A673 (cell line): ENCODE measurements at regions of chr10 and their contacts with region 1.

Region 1: GRCh38 chr10:100433253-100434240 is 29.3 kb upstream of the WNT8B start:
- DNase-seq: peak; percentile 96
- H3K4me3 ChIP-seq: no peak overlapping the region
- H3K27ac ChIP-seq: no peak overlapping the region
- H3K4me1 ChIP-seq: no peaks in the 10 kb centered on the region
- H3K27me3 ChIP-seq: no peaks in the 10 kb centered on the region
- CTCF ChIP-seq: peak; percentile 100

Region 2: GRCh38 chr10:100303724-100304319 is 129.7 kb before region 1 on chr10:
- CTCF ChIA-PET with region 1: no interaction called
- POLR2A ChIA-PET with region 1: no interaction called
- intact Hi-C with region 1: loop called (anchors 2 kb)
- DNase-seq: peak; percentile 48
- H3K4me3 ChIP-seq: no peak overlapping the region
- H3K27ac ChIP-seq: no peak overlapping the region
- H3K4me1 ChIP-seq: no peaks in the 10 kb centered on the region
- H3K27me3 ChIP-seq: no peaks in the 10 kb centered on the region
- CTCF ChIP-seq: peak; percentile 76

Region 3: DNA sequence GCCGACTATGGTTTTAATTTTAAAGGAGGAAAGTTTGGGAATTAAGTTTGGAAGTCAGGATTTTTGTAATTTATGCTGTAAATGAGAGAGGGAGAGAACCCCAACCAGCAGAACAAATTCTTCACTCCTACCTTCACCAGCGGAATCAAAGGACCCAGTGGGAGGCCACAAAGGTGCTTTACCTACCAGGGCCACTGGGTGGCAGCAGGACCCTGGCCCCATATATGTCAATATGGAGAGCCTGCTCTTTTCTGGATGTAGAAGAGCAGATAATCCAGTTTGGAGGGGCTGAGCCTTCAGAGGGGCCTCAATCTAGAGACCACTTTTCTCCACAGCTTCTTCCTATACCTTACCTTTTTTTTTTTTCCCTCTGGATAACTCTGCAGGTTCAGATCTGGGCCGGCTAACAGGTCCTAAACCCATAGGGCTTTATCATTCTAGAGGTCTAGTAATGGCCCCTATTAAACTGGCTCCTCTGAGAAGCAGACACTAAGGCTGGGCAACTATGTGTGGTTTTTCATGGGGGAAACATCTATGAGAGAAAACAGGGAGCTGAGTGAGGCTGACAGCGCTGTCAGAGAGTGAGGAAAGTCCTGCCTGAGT is 95.0 kb before region 1 on chr10:
- CTCF ChIA-PET with region 1: interaction called, 4 read pairs
- POLR2A ChIA-PET with region 1: no interaction called
- intact Hi-C with region 1: loop called (anchors 1 kb)
- DNase-seq: peak; percentile 79
- H3K4me3 ChIP-seq: no peak overlapping the region
- H3K27ac ChIP-seq: no peak overlapping the region
- H3K4me1 ChIP-seq: no peaks in the 10 kb centered on the region
- H3K27me3 ChIP-seq: no peaks in the 10 kb centered on the region
- CTCF ChIP-seq: peak; percentile 88